Activated CD8-positive, alpha-beta T cell treated with anti-CD3 and anti-CD28 coated beads for 36 hours (primary cell): ENCODE measurements at regions of chr6 and their contacts with region 1.

Region 1: DNA sequence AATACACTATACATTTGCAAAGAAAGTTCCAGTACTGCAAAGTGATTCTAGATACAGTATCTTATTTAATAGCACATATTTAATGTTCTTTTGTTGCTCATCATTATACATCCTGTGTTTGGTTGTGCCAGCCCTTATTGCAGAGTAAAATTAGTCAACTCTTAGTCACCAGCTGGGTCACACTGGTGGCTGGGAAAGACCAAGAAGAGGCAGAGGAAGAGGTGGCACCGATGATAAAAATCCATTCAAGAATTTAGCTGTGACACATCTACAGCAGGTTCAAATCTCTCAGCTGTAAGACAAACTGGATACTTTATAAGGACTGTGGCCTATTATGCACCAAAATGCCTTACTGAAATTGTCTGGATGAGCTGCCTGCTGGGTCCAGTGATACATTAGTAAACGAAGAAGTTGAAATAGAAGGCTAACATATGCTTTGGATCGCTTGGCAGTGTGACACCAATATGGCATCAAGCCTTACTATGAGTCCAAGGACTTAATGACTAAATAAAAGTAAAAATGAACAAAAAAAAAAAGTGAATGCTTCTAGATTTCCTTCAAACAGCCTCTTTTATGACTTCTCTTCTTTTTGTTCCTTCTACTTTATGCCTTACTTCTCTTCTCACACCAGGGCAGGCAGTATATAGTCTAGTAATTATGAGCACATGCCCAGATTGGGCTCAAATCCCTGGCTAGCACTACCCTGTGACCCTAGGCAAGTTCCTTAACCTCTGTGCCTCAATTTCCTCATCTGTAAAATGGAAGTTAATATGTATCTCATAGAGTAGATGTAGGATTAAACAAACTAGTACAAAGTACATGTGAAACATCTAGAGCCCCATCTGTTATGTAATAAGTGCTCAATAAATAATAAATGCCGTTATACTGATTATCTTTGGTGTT is 29.4 kb upstream of the RNF8 start:
- DNase-seq: peak; percentile 48
- ATAC-seq: peak; percentile 79
- H3K4me3 Mint-ChIP-seq: no peak overlapping the region
- H3K27ac Mint-ChIP-seq: peak overlapping the region; percentile 26
- H3K4me1 Mint-ChIP-seq: peaks cover 13% of the 10 kb centered on the region
- H3K27me3 Mint-ChIP-seq: no peaks in the 10 kb centered on the region
- CTCF ChIP-seq: no peak

Region 2: GRCh38 chr6:37303932-37304363 is 20.4 kb before region 1 on chr6:
- CTCF ChIA-PET with region 1: interaction called, 27 read pairs
- POLR2A ChIA-PET with region 1: no interaction called
- intact Hi-C with region 1: no loop called
- DNase-seq: peak; percentile 32
- ATAC-seq: peak; percentile 84
- H3K4me3 Mint-ChIP-seq: no peak overlapping the region
- H3K27ac Mint-ChIP-seq: no peak overlapping the region
- H3K4me1 Mint-ChIP-seq: no peaks in the 10 kb centered on the region
- H3K27me3 Mint-ChIP-seq: no peaks in the 10 kb centered on the region
- CTCF ChIP-seq: peak; percentile 65

Region 3: DNA sequence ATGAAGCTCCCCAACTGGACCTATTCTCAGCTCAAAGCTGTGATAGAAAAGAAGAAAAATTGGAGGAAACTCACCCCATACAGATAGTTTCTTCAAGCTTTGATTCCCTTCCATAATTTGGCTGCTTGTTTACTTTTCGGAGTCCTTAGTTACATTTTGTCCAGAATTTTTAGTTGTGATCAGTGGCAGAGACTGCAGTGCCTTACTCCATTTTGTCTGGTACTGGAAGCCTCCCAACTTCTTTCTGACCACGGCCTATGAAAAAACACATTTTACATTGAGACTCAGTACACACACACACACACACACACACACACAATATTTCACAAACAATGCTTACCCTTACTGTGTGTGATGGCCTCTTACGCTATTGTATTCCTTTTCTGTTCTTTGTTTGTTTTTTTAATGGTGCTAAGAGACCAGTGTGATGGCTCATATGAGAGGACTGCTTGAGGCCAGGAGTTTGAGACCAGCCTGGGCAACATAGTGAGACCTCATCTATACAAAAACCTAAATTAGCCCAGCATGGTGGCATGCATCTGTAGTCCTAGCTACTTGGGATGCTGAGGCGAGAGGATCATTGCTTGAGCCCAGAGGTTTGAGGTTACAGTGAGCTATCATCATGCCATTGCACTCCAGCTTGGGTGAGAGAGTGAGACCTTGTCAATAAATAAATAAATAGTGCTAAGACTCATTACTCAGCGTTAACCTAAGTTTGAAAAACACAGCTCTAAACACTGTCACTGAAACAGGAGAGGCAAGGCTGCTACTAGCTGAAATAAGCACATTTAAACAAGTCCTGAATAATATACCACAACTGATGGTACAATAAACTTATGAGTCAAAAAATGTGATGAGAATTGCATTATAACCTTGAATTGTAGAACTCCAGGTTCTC is 15.6 kb after region 1 on chr6:
- CTCF ChIA-PET with region 1: interaction called, 11 read pairs
- POLR2A ChIA-PET with region 1: no interaction called
- intact Hi-C with region 1: no loop called
- DNase-seq: no peak
- ATAC-seq: no peak
- H3K4me3 Mint-ChIP-seq: no peak overlapping the region
- H3K27ac Mint-ChIP-seq: no peak overlapping the region
- H3K4me1 Mint-ChIP-seq: no peaks in the 10 kb centered on the region
- H3K27me3 Mint-ChIP-seq: peaks cover 12% of the 10 kb centered on the region
- CTCF ChIP-seq: no peak

Region 4: DNA sequence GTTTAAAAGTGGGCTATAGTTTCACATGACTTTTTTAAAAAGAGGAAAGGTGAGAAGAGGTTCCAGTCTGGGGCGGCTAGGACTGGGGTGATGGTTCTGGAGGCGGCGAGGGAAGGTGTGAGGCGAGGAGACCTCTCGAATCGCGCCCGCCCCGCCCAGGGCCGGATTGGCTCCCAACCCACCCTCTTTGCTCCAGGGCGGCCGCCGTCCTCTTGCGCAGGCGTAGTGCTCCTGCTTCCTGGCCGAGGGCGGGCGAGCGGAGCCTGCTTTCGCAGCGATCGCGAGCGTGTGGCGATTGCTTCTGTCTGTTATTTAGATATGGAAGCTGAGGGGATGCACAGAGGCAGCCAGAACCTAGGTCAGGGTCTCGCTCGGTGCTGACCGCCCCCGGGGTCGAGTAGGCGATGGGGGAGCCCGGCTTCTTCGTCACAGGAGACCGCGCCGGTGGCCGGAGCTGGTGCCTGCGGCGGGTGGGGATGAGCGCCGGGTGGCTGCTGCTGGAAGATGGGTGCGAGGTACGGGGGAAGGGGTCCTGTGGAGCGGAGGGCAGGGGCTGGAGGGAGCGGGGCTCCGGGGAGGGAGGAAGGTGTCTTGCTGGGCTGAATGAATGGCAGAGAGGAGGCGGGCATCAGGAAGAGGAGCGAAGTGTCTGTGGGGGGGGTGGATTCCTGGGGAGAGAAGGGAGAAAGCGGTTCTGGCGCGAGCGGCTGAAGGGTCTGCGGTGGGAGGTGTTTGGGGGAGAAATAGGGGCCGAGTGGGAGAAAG is 29.6 kb after region 1 on chr6 and contains the start of gene RNF8:
- CTCF ChIA-PET with region 1: interaction called, 11 read pairs
- POLR2A ChIA-PET with region 1: no interaction called
- intact Hi-C with region 1: no loop called
- DNase-seq: peak; percentile 96
- ATAC-seq: peak; percentile 99
- H3K4me3 Mint-ChIP-seq: peak within 1 kb of the TSS; percentile 90
- H3K27ac Mint-ChIP-seq: peak within 1 kb of the TSS; percentile 89
- H3K4me1 Mint-ChIP-seq: peaks cover 26% of the 10 kb centered on the region
- H3K27me3 Mint-ChIP-seq: no peaks in the 10 kb centered on the region
- CTCF ChIP-seq: no peak
- total RNA-seq, gene RNF8: 19.8 to 21.1 TPM

Region 5: GRCh38 chr6:37365762-37366161 is 41.4 kb after region 1 on chr6:
- CTCF ChIA-PET with region 1: interaction called, 14 read pairs
- POLR2A ChIA-PET with region 1: no interaction called
- intact Hi-C with region 1: no loop called
- DNase-seq: no peak
- ATAC-seq: no peak
- H3K4me3 Mint-ChIP-seq: no peak overlapping the region
- H3K27ac Mint-ChIP-seq: no peak overlapping the region
- H3K4me1 Mint-ChIP-seq: peaks cover 5% of the 10 kb centered on the region
- H3K27me3 Mint-ChIP-seq: no peaks in the 10 kb centered on the region
- CTCF ChIP-seq: no peak